Mammary epithelial cell (primary cell): ENCODE measurements at regions of chr1 and their contacts with region 1.

Region 1: DNA sequence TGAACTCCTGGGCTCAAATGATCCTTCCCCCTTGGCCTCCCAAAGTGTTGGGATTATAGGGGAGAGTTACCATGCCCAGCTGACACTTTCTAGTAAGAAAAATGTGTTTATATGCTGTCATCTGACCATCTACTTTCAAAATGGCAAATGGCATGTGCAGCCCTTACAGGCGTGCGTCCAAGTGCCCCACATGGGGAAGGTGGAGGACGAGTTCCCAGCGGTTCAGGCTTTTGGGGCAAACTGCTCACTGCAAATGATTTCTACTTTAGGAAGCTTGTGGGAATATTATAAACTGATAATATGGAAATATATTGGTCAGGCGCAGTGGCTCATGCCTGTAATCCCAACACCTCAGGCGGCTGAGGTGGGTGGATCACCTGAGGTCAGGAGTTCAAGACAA is 41.5 kb upstream of the NADK start:
- DNase-seq: no peak
- H3K4me3 ChIP-seq: no peak overlapping the region
- H3K27ac ChIP-seq: no peak overlapping the region
- H3K4me1 ChIP-seq: no peaks in the 10 kb centered on the region
- H3K27me3 ChIP-seq: no peaks in the 10 kb centered on the region
- CTCF ChIP-seq: no peak

Region 2: GRCh38 chr1:1858382-1859086 is 38.8 kb after region 1 on chr1:
- CTCF ChIA-PET with region 1: no interaction called
- dilution Hi-C with region 1: no loop called
- in situ Hi-C with region 1: no loop called
- intact Hi-C with region 1: no loop called
- DNase-seq: peak; percentile 39
- H3K4me3 ChIP-seq: no peak overlapping the region
- H3K27ac ChIP-seq: no peak overlapping the region
- H3K4me1 ChIP-seq: peaks cover 13% of the 10 kb centered on the region
- H3K27me3 ChIP-seq: no peaks in the 10 kb centered on the region
- CTCF ChIP-seq: peak; percentile 17 to 34

Region 3: DNA sequence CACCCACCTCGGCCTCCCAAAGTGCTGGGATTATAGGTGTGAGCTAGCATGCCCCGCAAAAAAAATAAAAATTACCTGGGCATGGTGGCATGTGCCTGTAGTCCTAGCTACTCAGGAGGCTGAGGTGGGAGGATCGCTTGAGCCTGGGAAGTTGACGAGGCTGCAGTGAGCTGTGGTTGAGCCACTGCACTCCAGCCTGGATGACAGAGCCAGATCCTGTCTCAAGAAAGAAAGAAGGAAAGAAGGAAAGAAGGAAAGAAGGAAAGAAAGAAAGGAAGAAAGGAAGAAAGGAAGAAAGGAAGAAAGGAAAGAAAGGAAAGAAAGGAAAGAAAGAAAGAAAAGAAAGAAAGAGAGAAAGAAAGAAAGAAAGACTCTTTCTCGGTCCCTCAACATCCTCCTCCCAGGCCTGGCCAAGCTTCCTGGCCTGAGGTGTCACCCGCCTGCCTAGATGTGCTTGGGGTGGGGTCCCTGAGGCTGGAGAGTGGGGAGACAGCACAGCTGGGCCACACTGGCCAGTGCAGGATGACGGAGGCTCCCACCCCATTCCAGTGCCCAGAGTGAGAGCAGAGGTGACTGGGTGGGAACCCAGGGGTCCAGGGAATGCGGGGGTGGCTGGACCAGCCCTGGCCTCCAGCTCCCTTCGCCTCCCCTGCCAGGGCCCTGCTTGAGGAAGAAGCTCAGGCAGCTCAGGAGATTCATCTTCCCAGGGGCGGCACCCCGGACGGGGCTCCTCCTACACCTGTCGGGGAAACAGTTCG is 81.3 kb after region 1 on chr1:
- CTCF ChIA-PET with region 1: no interaction called
- dilution Hi-C with region 1: loop called (anchors 5 kb)
- in situ Hi-C with region 1: no loop called
- intact Hi-C with region 1: no loop called
- DNase-seq: no peak
- H3K4me3 ChIP-seq: no peak overlapping the region
- H3K27ac ChIP-seq: no peak overlapping the region
- H3K4me1 ChIP-seq: no peaks in the 10 kb centered on the region
- H3K27me3 ChIP-seq: no peaks in the 10 kb centered on the region
- CTCF ChIP-seq: no peak